ENCODE measurements at regions of chr14 and their contacts with region 1.

Region 1: DNA sequence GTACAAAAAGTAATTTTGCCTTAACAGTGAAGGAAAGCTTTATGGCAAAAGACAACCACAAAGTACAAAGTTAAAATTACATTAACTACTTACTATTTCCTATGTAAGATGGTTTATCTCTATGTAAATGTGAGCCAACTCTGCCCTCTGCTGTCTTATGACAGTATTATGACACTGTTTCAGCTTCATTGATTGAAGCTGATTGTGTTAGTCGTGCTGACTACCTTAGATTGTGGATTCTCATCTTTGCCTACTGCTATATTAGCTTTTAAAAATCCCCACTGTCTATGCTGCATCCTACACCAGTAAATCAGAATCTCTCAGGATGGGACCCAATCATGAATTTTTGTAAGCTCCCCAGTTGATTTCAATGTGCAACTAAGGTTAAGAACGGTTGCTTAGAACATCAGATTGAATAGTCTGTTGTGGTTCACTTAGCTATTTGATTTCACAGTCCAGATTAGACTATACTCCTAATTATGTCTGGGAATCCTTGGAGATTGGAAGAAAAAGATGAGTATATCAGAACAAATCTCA is 12.2 kb upstream of the SPTB start:
- DNase-seq: no peak
- H3K4me3 Mint-ChIP-seq: no peak overlapping the region
- H3K27ac Mint-ChIP-seq: no peak overlapping the region
- H3K4me1 Mint-ChIP-seq: no peaks in the 10 kb centered on the region
- H3K27me3 Mint-ChIP-seq: no peaks in the 10 kb centered on the region

Region 2: DNA sequence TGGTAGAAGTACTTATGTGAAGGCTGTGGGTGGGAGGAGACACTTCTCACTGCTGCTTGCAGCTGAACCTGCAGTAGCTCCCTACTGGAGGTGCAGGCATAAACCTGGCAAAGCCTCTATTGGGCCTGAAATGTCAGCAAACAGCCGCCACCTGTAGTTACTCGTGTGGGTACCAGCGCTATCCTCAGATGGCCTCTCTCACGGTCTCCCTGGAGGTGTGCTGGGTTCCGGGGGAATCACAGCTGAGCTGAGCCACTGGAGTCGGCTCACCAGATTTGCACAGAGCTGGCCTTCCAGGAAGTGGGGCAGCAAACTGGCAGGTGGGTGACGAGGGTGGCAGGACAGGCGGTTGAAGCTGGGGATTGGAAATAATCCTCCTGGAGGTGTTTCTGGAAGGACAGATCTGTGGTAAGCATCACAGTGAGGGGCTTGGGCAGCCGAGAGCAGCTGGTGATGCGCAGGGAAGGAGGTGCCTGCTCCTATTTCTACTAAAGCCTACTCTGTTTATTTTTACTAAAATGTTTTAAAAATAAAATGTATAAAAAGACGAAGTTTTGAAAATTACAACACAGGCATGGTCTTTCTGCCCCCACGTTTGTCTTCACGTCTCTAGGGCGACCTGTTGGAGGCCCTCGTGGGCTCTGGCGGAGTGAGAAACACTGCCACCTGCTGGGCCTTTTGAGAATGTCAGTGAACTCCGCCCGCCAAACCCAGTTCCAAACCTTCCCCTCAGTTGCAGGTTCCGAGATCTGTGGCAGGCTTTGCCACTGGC is 255.5 kb before region 1 on chr14:
- CTCF ChIA-PET with region 1: interaction called, 24 read pairs
- POLR2A ChIA-PET with region 1: no interaction called
- intact Hi-C with region 1: no loop called
- DNase-seq: peak; percentile 82
- H3K4me3 Mint-ChIP-seq: no peak overlapping the region
- H3K27ac Mint-ChIP-seq: no peak overlapping the region
- H3K4me1 Mint-ChIP-seq: no peaks in the 10 kb centered on the region
- H3K27me3 Mint-ChIP-seq: peaks cover 2% of the 10 kb centered on the region

Region 3: DNA sequence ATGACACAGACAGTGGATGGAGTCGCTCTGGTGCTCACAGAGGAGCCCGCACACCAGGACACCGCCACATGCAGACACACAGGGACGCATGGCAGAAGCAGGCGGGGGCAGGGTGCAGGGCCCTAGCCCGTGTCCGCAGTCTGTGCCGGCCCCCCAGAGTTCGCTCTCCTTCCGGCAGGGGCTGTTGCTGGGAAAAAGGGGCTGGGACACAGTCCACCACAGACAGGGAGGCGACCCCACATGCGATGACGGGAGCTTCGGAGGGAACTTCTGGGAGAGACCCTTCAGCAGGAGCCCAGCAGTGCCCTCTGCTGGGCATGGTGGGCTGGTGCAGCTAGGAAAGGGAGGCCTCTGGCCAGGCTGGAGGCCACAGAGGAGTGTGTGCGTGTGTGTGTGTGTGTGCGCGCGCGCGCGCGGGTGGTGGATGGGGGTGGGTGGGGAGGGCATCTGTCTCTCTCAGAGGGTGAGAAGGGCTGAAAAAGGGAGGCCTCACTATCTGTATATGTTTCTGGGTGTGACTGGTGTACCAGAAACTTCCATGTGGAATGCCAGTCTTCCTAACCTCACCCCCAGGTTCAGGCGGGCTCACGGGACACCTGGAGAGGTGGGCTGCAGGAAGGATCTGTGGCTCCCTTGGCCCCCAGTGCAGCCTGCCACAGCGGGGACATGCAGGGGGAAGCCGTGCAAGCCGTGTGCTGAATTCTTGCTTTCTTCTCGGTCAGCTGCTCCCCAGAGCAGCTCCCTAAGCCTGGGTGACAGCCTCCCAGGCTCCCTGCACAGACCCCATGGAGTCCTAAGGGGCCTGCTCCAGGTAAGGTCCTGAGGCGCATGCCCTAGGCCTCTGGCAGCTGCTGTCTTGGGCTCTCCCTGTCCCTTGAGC is 127.0 kb before region 1 on chr14:
- CTCF ChIA-PET with region 1: interaction called, 14 read pairs
- POLR2A ChIA-PET with region 1: no interaction called
- intact Hi-C with region 1: loop called (anchors 5 kb)
- DNase-seq: peak; percentile 80
- H3K4me3 Mint-ChIP-seq: peak overlapping the region; percentile 49
- H3K27ac Mint-ChIP-seq: no peak overlapping the region
- H3K4me1 Mint-ChIP-seq: peaks cover 55% of the 10 kb centered on the region
- H3K27me3 Mint-ChIP-seq: no peaks in the 10 kb centered on the region

Region 4: GRCh38 chr14:64800000-64800399 is 91.9 kb before region 1 on chr14:
- CTCF ChIA-PET with region 1: interaction called, 17 read pairs
- POLR2A ChIA-PET with region 1: no interaction called
- intact Hi-C with region 1: no loop called
- DNase-seq: peak; percentile 16
- H3K4me3 Mint-ChIP-seq: no peak overlapping the region
- H3K27ac Mint-ChIP-seq: no peak overlapping the region
- H3K4me1 Mint-ChIP-seq: no peaks in the 10 kb centered on the region
- H3K27me3 Mint-ChIP-seq: no peaks in the 10 kb centered on the region

Region 5: DNA sequence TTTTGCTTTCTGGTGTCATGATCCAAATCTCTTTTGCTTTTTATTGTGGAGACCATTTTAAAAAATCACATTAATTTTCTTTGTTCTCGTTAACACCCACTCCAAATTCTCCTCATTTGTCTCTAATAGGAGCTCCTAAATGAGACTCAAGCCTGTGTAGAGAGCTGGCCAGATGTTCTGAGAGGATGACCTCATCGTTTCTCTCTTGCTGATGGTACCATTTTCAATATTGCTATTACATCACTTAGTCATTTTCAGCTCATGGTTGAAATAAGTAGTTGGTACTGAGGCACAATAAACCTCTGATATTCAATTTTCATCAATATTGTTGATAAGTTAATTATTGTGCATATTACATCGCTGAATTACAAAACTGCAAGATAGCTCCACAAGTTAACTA is 43.7 kb before region 1 on chr14:
- CTCF ChIA-PET with region 1: interaction called, 13 read pairs
- POLR2A ChIA-PET with region 1: no interaction called
- intact Hi-C with region 1: no loop called
- DNase-seq: no peak
- H3K4me3 Mint-ChIP-seq: no peak overlapping the region
- H3K27ac Mint-ChIP-seq: no peak overlapping the region
- H3K4me1 Mint-ChIP-seq: peaks cover 9% of the 10 kb centered on the region
- H3K27me3 Mint-ChIP-seq: peaks cover 16% of the 10 kb centered on the region

Region 6: DNA sequence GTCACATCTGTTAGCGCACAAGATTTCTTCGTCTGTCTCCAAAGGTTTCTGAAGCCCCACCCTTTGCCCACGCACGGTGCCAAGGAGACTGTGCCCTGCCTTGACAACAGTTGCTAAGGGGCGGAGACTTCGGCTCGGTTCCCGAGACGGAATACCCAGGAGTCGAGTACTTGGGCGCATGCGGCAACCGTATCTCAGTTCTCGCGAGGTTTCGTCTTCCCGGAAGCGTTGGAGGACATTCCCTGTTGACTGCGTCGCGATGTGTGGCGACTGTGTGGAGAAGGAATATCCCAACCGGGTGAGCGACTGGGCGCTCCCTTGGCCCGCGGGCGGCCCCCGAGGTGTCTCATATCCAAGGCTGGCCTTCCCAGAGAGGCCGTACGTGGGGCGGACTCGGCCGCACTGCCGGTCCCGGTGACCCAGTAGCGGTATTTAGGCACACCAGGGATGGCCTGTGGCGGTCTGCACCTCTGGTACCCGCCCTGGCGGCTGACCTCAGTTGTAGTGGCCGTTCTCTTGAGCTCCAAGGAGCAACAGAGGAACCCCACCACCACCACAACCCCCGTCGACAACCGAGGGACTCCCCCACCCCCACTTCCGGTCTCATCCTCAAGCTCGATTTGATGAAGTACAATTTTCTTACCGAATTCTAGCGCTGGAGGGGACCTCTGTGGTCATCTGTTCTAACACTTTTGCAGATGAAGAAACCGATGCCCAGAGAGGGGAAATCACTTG is 22.5 kb after region 1 on chr14 and contains the start of gene CHURC1:
- CTCF ChIA-PET with region 1: interaction called, 14 read pairs
- POLR2A ChIA-PET with region 1: no interaction called
- intact Hi-C with region 1: no loop called
- DNase-seq: peak; percentile 98
- H3K4me3 Mint-ChIP-seq: peak within 1 kb of the TSS; percentile 78
- H3K27ac Mint-ChIP-seq: peak within 1 kb of the TSS; percentile 90
- H3K4me1 Mint-ChIP-seq: peaks cover 44% of the 10 kb centered on the region
- H3K27me3 Mint-ChIP-seq: peaks cover 3% of the 10 kb centered on the region
- total RNA-seq, gene CHURC1: 61.7 to 62.6 TPM

Measured in activated CD4-positive, alpha-beta memory T cell treated with anti-CD3 and anti-CD28 coated beads for 36 hours (primary cell).